ENCODE measurements at regions of chr1 and their contacts with region 1.

Region 1: GRCh38 chr1:158035976-158036583 is 42.6 kb downstream of the KIRREL1 start:
- DNase-seq: no peak
- H3K4me3 Mint-ChIP-seq: no peak overlapping the region
- H3K27ac Mint-ChIP-seq: no peak overlapping the region
- H3K4me1 Mint-ChIP-seq: no peaks in the 10 kb centered on the region
- H3K27me3 Mint-ChIP-seq: peaks cover 2% of the 10 kb centered on the region

Region 2: DNA sequence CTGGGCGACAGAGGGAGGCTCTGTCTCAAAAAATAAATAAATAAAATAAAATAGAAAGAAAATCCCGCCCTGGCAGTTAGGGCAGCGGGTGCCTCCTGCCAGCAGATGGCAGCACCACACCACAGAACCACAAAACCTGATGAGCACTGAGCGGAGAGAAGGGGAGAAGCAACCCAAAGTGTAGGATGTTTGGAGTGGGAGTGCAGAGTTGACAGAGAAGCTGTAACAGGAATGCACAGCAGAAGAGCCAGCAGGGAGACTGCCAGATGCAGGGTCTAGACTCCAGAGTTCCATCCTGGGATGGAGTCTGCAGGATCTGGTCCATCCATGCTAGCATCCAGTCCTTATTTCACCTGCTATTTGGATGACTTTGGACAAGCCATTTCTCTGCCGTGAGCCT is 72.4 kb before region 1 on chr1:
- intact Hi-C with region 1: loop called (anchors 2 kb)
- DNase-seq: peak; percentile 6
- H3K4me3 Mint-ChIP-seq: no peak overlapping the region
- H3K27ac Mint-ChIP-seq: no peak overlapping the region
- H3K4me1 Mint-ChIP-seq: no peaks in the 10 kb centered on the region
- H3K27me3 Mint-ChIP-seq: peaks cover 3% of the 10 kb centered on the region

Region 3: GRCh38 chr1:157992031-157992832 is 43.8 kb before region 1 on chr1:
- intact Hi-C with region 1: loop called (anchors 1 kb)
- DNase-seq: no peak
- H3K4me3 Mint-ChIP-seq: no peak overlapping the region
- H3K27ac Mint-ChIP-seq: no peak overlapping the region
- H3K4me1 Mint-ChIP-seq: no peaks in the 10 kb centered on the region
- H3K27me3 Mint-ChIP-seq: peaks cover 41% of the 10 kb centered on the region

Measured in activated T-helper 1 cell treated with anti-CD3 and anti-CD28 coated beads, Interleukin-12 subunit alpha, Interleukin-12 subunit beta, Interleukin-2, Interleukin-4 antibody, amounts not matched to agents 30 ng/mL and 10 ng/mL and 1 ng/mL, durations not matched to agents 14 hours and 24 hours and 36 hours (primary cell).